ENCODE measurements at regions of chr5 and their contacts with region 1.

Region 1: DNA sequence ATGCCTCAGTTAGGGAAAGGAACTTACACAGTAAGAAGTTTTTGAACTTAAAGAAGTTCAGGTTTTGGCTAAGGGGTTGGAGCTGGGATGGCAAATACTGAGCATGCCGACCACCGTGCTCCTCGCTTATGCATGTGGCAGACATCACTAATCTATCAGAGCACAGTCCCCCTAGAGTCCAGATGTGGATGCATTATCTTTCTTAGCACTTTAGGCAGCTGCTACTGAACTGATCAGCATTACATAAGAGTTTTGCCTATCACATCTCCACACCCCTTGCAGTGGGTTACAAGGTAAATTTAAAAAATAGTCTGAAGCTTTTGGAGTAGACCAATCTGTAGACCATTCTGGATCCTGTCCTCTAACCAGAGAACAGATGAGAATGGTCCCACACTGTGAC is 22.4 kb downstream of the MACIR start:
- DNase-seq: no peak
- ATAC-seq: no peak
- H3K4me3 ChIP-seq: no peak overlapping the region
- H3K27ac ChIP-seq: no peak overlapping the region
- H3K4me1 ChIP-seq: peaks cover 15% of the 10 kb centered on the region
- H3K27me3 ChIP-seq: no peaks in the 10 kb centered on the region
- CTCF ChIP-seq: no peak

Region 2: GRCh38 chr5:103327893-103328292 is 46.9 kb after region 1 on chr5:
- CTCF ChIA-PET with region 1: no interaction called
- POLR2A ChIA-PET with region 1: no interaction called
- intact Hi-C with region 1: loop called (anchors 5 kb)
- DNase-seq: no peak
- ATAC-seq: peak; percentile 96
- H3K4me3 ChIP-seq: no peak overlapping the region
- H3K27ac ChIP-seq: no peak overlapping the region
- H3K4me1 ChIP-seq: no peaks in the 10 kb centered on the region
- H3K27me3 ChIP-seq: no peaks in the 10 kb centered on the region
- CTCF ChIP-seq: no peak

Region 3: DNA sequence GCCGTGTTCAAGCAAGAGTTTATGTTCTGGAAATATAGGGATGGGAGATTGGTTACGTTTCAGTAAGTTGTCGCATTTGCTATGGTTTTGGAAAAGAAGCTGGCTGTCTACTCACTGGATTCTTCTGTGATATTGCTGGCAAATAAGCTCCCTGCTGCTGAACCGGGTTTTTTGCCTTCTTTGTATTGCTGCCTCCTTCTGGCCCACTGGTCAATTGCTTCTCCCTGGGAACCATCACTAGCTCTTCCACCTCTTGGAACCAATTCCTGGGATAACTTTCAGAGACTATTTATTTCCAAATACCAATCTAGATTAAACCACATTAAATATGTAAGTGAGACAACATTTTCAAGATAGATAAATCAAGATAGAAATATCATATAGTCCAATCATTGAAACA is 238.6 kb after region 1 on chr5:
- CTCF ChIA-PET with region 1: interaction called, 17 read pairs
- POLR2A ChIA-PET with region 1: no interaction called
- intact Hi-C with region 1: no loop called
- DNase-seq: peak; percentile 73
- ATAC-seq: peak; percentile 37; the same call in 1 of the 2 replicates
- H3K4me3 ChIP-seq: no peak overlapping the region
- H3K27ac ChIP-seq: no peak overlapping the region
- H3K4me1 ChIP-seq: peaks cover 16% of the 10 kb centered on the region
- H3K27me3 ChIP-seq: no peaks in the 10 kb centered on the region
- CTCF ChIP-seq: peak; percentile 84

Measured in PC-3 (cell line).